ENCODE measurements at regions of chr6 and their contacts with region 1.

Region 1: DNA sequence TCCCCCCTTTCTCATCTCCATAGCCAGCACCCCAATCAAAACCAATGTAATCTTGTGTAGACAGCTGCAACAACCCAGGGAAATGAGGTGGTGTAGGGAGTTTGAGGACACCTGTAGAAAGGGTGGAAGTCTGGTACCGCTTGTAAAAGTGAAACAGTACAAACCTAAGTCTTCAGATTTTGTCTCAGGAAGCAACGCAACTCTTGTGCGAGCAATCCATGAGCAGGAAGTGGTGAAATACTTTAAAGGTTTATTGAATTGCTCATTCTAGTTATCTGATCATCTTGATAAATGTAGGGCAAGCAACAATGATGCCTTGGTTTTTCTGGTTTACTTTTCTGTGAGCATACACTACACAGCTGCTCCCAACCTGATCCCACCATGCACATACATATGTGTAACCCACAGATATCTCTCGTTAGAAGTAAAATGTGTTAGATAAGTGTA is 71.1 kb upstream of the THEMIS start:
- DNase-seq: peak; percentile 81 to 89 (median 83)
- H3K4me3 ChIP-seq: peak overlapping the region in 1 of 2 donors; percentile 36
- H3K4me3 Mint-ChIP-seq: peak overlapping the region; percentile 87 to 95 (median 90)
- H3K27ac ChIP-seq: peak overlapping the region; percentile 71
- H3K27ac Mint-ChIP-seq: peak overlapping the region; percentile 92 to 98 (median 98)
- H3K4me1 ChIP-seq: peaks cover 64% of the 10 kb centered on the region
- H3K4me1 Mint-ChIP-seq: peaks cover 41 to 56% (median 46%) of the 10 kb centered on the region in 4 donors
- H3K27me3 ChIP-seq: no peaks in the 10 kb centered on the region
- H3K27me3 Mint-ChIP-seq: no peaks in the 10 kb centered on the region

Region 2: DNA sequence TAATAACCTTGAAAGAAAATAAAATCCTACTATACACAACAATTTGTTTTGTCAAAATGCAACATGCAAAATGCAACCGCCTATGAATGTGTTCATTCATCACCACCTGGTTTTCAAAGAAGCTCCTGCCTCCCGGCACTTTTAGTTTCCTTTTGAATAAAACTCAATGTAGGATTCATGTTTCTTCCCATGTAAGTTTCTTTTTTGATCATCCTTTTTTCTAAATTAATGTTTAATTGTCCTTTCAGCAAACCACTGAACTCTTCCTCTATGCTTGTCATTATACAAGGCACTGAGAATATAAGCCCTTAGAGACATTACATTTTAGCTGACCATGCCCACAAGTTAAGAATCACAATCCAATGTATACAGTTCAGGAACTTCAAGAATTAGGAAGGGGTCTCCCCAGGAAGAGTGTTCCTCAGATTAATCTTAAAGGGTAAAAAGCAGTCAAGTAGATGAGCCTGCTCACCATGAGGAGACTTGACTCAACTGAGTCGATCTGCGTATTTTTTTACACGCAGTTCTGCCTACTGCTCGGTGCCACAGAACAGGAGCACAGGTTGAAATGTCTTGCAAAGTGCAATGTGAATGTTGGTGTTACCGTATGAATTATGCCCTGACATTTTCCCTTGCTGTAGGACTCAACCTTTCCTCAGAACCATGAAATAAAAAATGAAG is 63.9 kb before region 1 on chr6:
- CTCF ChIA-PET with region 1: no interaction called
- POLR2A ChIA-PET with region 1: interaction called, 24 read pairs
- intact Hi-C with region 1: loop called (anchors 2 kb)
- DNase-seq: peak in 4 of 5 donors; percentile 36 to 43 (median 39)
- H3K4me3 ChIP-seq: peak overlapping the region; percentile 44 to 72
- H3K4me3 Mint-ChIP-seq: peak overlapping the region; percentile 82 to 98 (median 90)
- H3K27ac ChIP-seq: peak overlapping the region; percentile 77
- H3K27ac Mint-ChIP-seq: peak overlapping the region; percentile 87 to 98 (median 95)
- H3K4me1 ChIP-seq: peaks cover 56% of the 10 kb centered on the region
- H3K4me1 Mint-ChIP-seq: peaks cover 48 to 76% (median 60%) of the 10 kb centered on the region in 4 donors
- H3K27me3 ChIP-seq: no peaks in the 10 kb centered on the region
- H3K27me3 Mint-ChIP-seq: no peaks in the 10 kb centered on the region

Region 3: DNA sequence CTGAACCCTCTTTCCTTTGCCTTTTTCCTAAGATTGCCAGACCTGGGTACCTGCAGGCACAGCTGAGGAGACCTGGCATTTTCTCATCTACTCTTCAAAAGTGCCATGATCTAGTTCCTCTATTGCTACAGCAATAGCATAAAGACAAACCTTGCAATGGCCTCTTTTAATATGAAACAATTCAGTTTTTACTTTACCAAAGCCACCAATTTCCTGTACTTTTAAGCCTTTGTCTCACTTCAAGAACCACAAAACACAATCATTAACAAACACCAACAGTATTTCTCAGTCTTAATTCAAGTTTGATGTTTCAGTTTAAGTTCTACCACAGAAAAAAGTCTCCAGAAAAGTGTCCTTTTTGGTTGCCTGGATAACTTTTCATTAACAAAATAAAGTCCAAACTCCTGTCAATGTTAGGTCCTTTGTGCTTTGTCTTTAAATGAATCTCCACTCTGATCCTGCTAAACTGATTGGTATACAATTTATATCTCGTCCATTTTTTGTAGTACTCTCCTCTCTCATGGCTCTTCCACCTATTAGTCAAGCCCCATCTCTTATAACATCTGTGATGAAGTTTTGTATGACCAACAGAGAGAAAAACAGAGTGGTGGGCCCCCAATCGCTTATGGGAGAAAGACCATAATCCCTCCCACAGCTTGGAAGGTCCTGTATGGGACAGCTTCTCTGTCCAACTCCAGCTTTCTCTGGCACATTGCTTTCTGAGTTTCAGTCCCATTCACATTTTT is 20.6 kb before region 1 on chr6:
- CTCF ChIA-PET with region 1: interaction called, 8 read pairs
- POLR2A ChIA-PET with region 1: interaction called, 55 read pairs
- intact Hi-C with region 1: loop called (anchors 1 kb)
- DNase-seq: peak in 4 of 5 donors; percentile 61 to 73 (median 66)
- H3K4me3 ChIP-seq: peak overlapping the region; percentile 4 to 12
- H3K4me3 Mint-ChIP-seq: peak overlapping the region; percentile 69 to 88 (median 81)
- H3K27ac ChIP-seq: peak overlapping the region; percentile 14
- H3K27ac Mint-ChIP-seq: peak overlapping the region; percentile 83 to 91 (median 88)
- H3K4me1 ChIP-seq: peaks cover 66% of the 10 kb centered on the region
- H3K4me1 Mint-ChIP-seq: peaks cover 38 to 69% (median 55%) of the 10 kb centered on the region in 4 donors
- H3K27me3 ChIP-seq: no peaks in the 10 kb centered on the region
- H3K27me3 Mint-ChIP-seq: no peaks in the 10 kb centered on the region

Region 4: GRCh38 chr6:129498950-129499842 is 1527.2 kb after region 1 on chr6:
- CTCF ChIA-PET with region 1: no interaction called
- POLR2A ChIA-PET with region 1: no interaction called
- intact Hi-C with region 1: no loop called
- DNase-seq: peak; percentile 29 to 62 (median 55)
- H3K4me3 ChIP-seq: no peak overlapping the region
- H3K4me3 Mint-ChIP-seq: peak overlapping the region; percentile 37 to 89 (median 76)
- H3K27ac ChIP-seq: no peak overlapping the region
- H3K27ac Mint-ChIP-seq: peak overlapping the region in 5 of 7 donors; percentile 1 to 50 (median 19)
- H3K4me1 ChIP-seq: peaks cover 21% of the 10 kb centered on the region
- H3K4me1 Mint-ChIP-seq: peaks cover 15 to 24% (median 19%) of the 10 kb centered on the region in 4 donors
- H3K27me3 ChIP-seq: no peaks in the 10 kb centered on the region
- H3K27me3 Mint-ChIP-seq: no peaks in the 10 kb centered on the region

Measured in CD4-positive, alpha-beta memory T cell (primary cell).